Naive thymus-derived CD4-positive, alpha-beta T cell (primary cell): ENCODE measurements at regions of chr5 and their contacts with region 1.

Region 1: GRCh38 chr5:132490486-132491367 is at the start of gene IRF1:
- DNase-seq: peak; percentile 97 to 100 (median 99)
- ATAC-seq: peak; percentile 89
- H3K4me3 ChIP-seq: peak within 1 kb of the TSS; percentile 78
- H3K4me3 Mint-ChIP-seq: peak within 1 kb of the TSS; percentile 92 to 98 (median 95)
- H3K27ac ChIP-seq: peak within 1 kb of the TSS; percentile 99
- H3K27ac Mint-ChIP-seq: peak within 1 kb of the TSS; percentile 93 to 99 (median 96)
- H3K4me1 ChIP-seq: peaks cover 59 to 65% of the 10 kb centered on the region in 2 donors
- H3K4me1 Mint-ChIP-seq: peaks cover 52 to 78% (median 71%) of the 10 kb centered on the region in 7 donors
- H3K27me3 ChIP-seq: no peaks in the 10 kb centered on the region
- H3K27me3 Mint-ChIP-seq: peaks cover 0 to 2% (median 0%) of the 10 kb centered on the region in 5 donors
- total RNA-seq, gene IRF1: 118 to 632 (median 549) TPM

Region 2: DNA sequence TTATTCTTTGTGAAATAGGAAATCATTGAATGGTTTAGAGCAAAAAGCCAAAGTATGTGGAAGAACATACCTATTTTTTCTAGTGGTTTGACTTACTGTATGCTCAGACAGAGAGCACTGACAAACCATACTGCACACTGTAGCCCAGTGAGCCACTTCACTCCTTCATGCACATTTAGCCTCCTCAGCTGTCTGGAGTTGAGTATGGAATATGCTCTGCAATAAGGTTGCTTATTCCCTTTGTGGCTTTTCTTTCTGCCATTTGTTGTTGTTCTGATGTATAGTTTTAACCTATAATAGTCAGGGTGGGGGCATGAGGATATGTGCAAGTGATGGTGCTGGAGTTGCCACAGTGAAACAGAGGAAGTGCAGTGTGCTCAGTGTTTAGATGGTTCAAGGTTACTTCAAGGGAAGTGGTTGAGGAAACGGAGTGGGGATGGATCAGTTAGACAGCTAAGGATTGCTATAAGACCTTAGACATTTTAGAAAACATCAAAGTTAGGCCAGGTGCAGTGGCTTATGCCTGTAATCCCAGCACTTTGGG is 1126.1 kb before region 1 on chr5:
- CTCF ChIA-PET with region 1: no interaction called
- POLR2A ChIA-PET with region 1: no interaction called
- intact Hi-C with region 1: no loop called
- DNase-seq: peak in 6 of 9 donors; percentile 45 to 66 (median 57)
- ATAC-seq: peak; percentile 70
- H3K4me3 ChIP-seq: no peak overlapping the region
- H3K4me3 Mint-ChIP-seq: peak overlapping the region; percentile 34 to 70 (median 60)
- H3K27ac ChIP-seq: peak overlapping the region; percentile 61
- H3K27ac Mint-ChIP-seq: peak overlapping the region; percentile 78 to 97 (median 85)
- H3K4me1 ChIP-seq: peaks cover 34 to 40% of the 10 kb centered on the region in 2 donors
- H3K4me1 Mint-ChIP-seq: peaks cover 41 to 91% (median 79%) of the 10 kb centered on the region in 7 donors
- H3K27me3 ChIP-seq: no peaks in the 10 kb centered on the region
- H3K27me3 Mint-ChIP-seq: no peaks in the 10 kb centered on the region

Region 3: DNA sequence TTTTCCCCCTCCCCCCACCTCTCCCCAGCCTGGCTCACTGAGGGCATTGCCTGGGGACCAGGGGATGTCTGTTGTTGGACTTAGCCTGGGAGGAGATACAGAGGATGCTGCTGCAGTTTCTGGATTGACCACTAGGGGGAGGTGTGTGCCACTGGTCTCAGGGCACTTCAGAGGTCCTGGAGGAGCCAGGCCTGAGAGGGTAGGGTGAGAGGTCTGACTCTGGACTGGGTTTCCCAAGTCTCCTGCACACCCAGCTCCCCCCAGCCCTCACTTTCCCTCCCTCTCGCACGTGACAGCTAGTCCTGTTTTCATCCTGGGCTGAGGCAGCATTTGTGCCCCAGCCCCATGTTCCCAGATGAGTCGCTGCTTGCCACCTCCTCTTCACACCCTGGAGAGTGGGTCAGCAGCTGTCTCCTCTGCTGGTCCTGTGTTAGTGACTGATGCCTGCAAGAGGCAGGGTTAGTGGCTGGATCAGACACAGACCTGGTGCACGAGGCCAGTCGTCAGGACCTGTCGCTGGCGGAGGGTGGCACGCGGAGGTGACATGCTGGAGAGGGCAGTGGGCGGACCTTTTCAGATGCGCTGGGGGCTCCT is 425.9 kb before region 1 on chr5:
- CTCF ChIA-PET with region 1: no interaction called
- POLR2A ChIA-PET with region 1: no interaction called
- intact Hi-C with region 1: loop called in 1 of 2 experiments (anchors 10 kb)
- DNase-seq: peak; percentile 40 to 82 (median 64)
- ATAC-seq: peak; percentile 80
- H3K4me3 ChIP-seq: no peak overlapping the region
- H3K4me3 Mint-ChIP-seq: no peak overlapping the region
- H3K27ac ChIP-seq: no peak overlapping the region
- H3K27ac Mint-ChIP-seq: peak overlapping the region in 2 of 9 donors; percentile 30 to 79
- H3K4me1 ChIP-seq: peaks cover 0 to 9% of the 10 kb centered on the region in 2 donors
- H3K4me1 Mint-ChIP-seq: peaks cover 0 to 62% (median 5%) of the 10 kb centered on the region in 7 donors
- H3K27me3 ChIP-seq: no peaks in the 10 kb centered on the region
- H3K27me3 Mint-ChIP-seq: peaks cover 0 to 7% (median 0%) of the 10 kb centered on the region in 5 donors

Region 4: GRCh38 chr5:132410451-132411381 is 80.0 kb before region 1 on chr5:
- CTCF ChIA-PET with region 1: interaction called, 23 read pairs
- POLR2A ChIA-PET with region 1: interaction called, 177 read pairs
- intact Hi-C with region 1: loop called (anchors 1 kb)
- DNase-seq: peak; percentile 71 to 89 (median 84)
- ATAC-seq: peak; percentile 85
- H3K4me3 ChIP-seq: peak overlapping the region; percentile 81
- H3K4me3 Mint-ChIP-seq: peak overlapping the region; percentile 91 to 99 (median 98)
- H3K27ac ChIP-seq: peak overlapping the region; percentile 98
- H3K27ac Mint-ChIP-seq: peak overlapping the region; percentile 96 to 99 (median 99)
- H3K4me1 ChIP-seq: peaks cover 53 to 65% of the 10 kb centered on the region in 2 donors
- H3K4me1 Mint-ChIP-seq: peaks cover 46 to 86% (median 74%) of the 10 kb centered on the region in 7 donors
- H3K27me3 ChIP-seq: no peaks in the 10 kb centered on the region
- H3K27me3 Mint-ChIP-seq: peaks cover 0 to under 1% (median 0%) of the 10 kb centered on the region in 5 donors

Region 5: GRCh38 chr5:132456296-132457001 is 34.3 kb before region 1 on chr5:
- CTCF ChIA-PET with region 1: interaction called, 30 read pairs
- POLR2A ChIA-PET with region 1: interaction called, 226 read pairs
- intact Hi-C with region 1: loop called (anchors 1 to 2 kb)
- DNase-seq: peak in 8 of 9 donors; percentile 55 to 80 (median 70)
- ATAC-seq: peak; percentile 84
- H3K4me3 ChIP-seq: peak overlapping the region; percentile 40
- H3K4me3 Mint-ChIP-seq: peak overlapping the region; percentile 60 to 85 (median 78)
- H3K27ac ChIP-seq: peak overlapping the region; percentile 77
- H3K27ac Mint-ChIP-seq: peak overlapping the region; percentile 93 to 100 (median 99)
- H3K4me1 ChIP-seq: peaks cover 89 to 96% of the 10 kb centered on the region in 2 donors
- H3K4me1 Mint-ChIP-seq: peaks cover 81 to 94% (median 91%) of the 10 kb centered on the region in 7 donors
- H3K27me3 ChIP-seq: no peaks in the 10 kb centered on the region
- H3K27me3 Mint-ChIP-seq: no peaks in the 10 kb centered on the region

Region 6: DNA sequence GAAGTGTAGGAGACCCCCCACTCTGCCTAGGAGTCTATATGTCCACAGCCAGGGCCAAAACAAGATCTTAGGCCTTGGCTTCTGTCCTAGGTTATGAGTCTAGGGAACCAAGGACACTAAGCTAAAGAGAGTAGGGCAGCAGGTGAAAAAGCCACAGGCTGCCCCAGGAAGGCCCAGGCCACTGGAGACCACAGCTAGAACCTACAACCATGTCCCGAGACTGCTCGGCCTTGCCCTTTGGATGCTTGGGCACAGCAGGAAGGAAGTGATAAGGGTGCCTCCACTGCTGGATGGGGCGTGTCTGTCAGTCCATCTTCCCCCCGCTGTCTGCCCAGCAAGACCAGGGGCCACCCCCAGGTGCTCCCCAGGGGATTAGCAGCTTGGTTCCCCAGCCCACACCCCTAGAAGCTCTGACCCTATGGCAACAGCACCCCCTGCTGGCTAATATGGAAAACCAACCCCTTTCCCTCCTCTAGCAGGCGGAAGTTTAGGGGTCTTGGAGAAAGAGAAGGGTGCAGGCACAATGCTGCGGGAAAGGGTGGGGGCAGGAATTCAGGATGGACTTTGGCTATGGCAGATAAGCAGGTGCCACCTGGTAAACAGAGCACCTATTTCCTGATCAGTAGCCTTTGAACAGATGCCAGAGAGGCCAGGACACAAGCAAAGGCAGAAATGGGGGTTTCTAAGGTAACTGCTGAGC is 10.4 kb after region 1 on chr5:
- CTCF ChIA-PET with region 1: interaction called, 16 read pairs
- POLR2A ChIA-PET with region 1: interaction called, 90 read pairs
- intact Hi-C with region 1: loop called in 1 of 2 experiments (anchors 1 kb)
- DNase-seq: peak; percentile 52 to 85 (median 76)
- ATAC-seq: peak; percentile 52
- H3K4me3 ChIP-seq: no peak overlapping the region
- H3K4me3 Mint-ChIP-seq: peak overlapping the region in 1 of 10 donors; percentile 48
- H3K27ac ChIP-seq: peak overlapping the region; percentile 99
- H3K27ac Mint-ChIP-seq: peak overlapping the region in 8 of 9 donors; percentile 26 to 98 (median 82)
- H3K4me1 ChIP-seq: peaks cover 12 to 21% of the 10 kb centered on the region in 2 donors
- H3K4me1 Mint-ChIP-seq: peaks cover 6 to 48% (median 31%) of the 10 kb centered on the region in 7 donors
- H3K27me3 ChIP-seq: no peaks in the 10 kb centered on the region
- H3K27me3 Mint-ChIP-seq: peaks cover 0 to 5% (median 0%) of the 10 kb centered on the region in 5 donors

Region 7: GRCh38 chr5:133051580-133052332 is 561.0 kb after region 1 on chr5 and contains the start of gene HSPA4:
- CTCF ChIA-PET with region 1: no interaction called
- POLR2A ChIA-PET with region 1: no interaction called
- intact Hi-C with region 1: loop called in 1 of 2 experiments (anchors 5 kb)
- DNase-seq: peak; percentile 86 to 99 (median 98)
- ATAC-seq: peak; percentile 91
- H3K4me3 ChIP-seq: peak within 1 kb of the TSS; percentile 92
- H3K4me3 Mint-ChIP-seq: peak within 1 kb of the TSS; percentile 91 to 99 (median 98)
- H3K27ac ChIP-seq: peak within 1 kb of the TSS; percentile 98
- H3K27ac Mint-ChIP-seq: peak within 1 kb of the TSS; percentile 99 to 100 (median 100)
- H3K4me1 ChIP-seq: peaks cover 17 to 19% of the 10 kb centered on the region in 2 donors
- H3K4me1 Mint-ChIP-seq: peaks cover 31 to 70% (median 52%) of the 10 kb centered on the region in 7 donors
- H3K27me3 ChIP-seq: no peaks in the 10 kb centered on the region
- H3K27me3 Mint-ChIP-seq: no peaks in the 10 kb centered on the region
- total RNA-seq, gene HSPA4: 42.1 to 103 (median 50.0) TPM

Region 8: DNA sequence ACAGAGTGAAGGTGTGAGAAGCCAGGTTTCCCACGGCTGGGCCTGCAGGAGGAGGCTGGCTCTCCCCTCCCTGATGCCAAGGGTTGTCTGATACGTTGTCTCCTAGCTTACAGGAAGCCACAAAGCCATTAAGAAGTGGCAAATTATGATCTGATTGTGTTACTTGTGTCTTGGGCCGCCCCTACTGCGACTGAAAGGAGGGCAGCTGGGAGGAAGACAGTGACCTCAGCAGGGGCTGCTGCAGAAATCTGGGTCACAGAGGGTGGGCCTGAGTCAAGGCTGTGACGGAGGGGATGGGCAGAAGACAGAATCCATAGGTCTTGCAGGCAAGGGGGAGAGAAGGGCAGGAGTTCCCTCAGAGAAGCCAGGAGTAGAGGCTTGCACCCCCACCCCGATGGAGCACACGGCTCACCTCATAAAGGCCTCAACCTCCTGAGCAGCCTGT is 976.6 kb after region 1 on chr5:
- CTCF ChIA-PET with region 1: no interaction called
- POLR2A ChIA-PET with region 1: no interaction called
- intact Hi-C with region 1: no loop called
- DNase-seq: no peak
- ATAC-seq: peak; percentile 62
- H3K4me3 ChIP-seq: no peak overlapping the region
- H3K4me3 Mint-ChIP-seq: no peak overlapping the region
- H3K27ac ChIP-seq: no peak overlapping the region
- H3K27ac Mint-ChIP-seq: no peak overlapping the region
- H3K4me1 ChIP-seq: peaks cover 0 to 16% of the 10 kb centered on the region in 2 donors
- H3K4me1 Mint-ChIP-seq: peaks cover 0 to 17% (median 4%) of the 10 kb centered on the region in 7 donors
- H3K27me3 ChIP-seq: no peaks in the 10 kb centered on the region
- H3K27me3 Mint-ChIP-seq: peaks cover 5 to 21% (median 10%) of the 10 kb centered on the region in 5 donors

Region 9: GRCh38 chr5:134132372-134133034 is 1641.8 kb after region 1 on chr5:
- CTCF ChIA-PET with region 1: no interaction called
- POLR2A ChIA-PET with region 1: no interaction called
- intact Hi-C with region 1: no loop called
- DNase-seq: peak; percentile 52 to 94 (median 87)
- ATAC-seq: peak; percentile 87
- H3K4me3 ChIP-seq: peak overlapping the region; percentile 86
- H3K4me3 Mint-ChIP-seq: peak overlapping the region; percentile 93 to 100 (median 98)
- H3K27ac ChIP-seq: peak overlapping the region; percentile 97
- H3K27ac Mint-ChIP-seq: peak overlapping the region; percentile 90 to 99 (median 98)
- H3K4me1 ChIP-seq: peaks cover 92 to 97% of the 10 kb centered on the region in 2 donors
- H3K4me1 Mint-ChIP-seq: peaks cover 57 to 100% (median 90%) of the 10 kb centered on the region in 7 donors
- H3K27me3 ChIP-seq: no peaks in the 10 kb centered on the region
- H3K27me3 Mint-ChIP-seq: peaks cover 0 to 2% (median 0%) of the 10 kb centered on the region in 5 donors